ENCODE measurements at regions of chr6 and their contacts with region 1.

Region 1: GRCh38 chr6:127992144-127992543 is 91.3 kb upstream of the THEMIS start:
- DNase-seq: no peak
- ATAC-seq: no peak
- H3K4me3 ChIP-seq: no peak overlapping the region
- H3K4me3 Mint-ChIP-seq: no peak overlapping the region
- H3K27ac ChIP-seq: no peak overlapping the region
- H3K27ac Mint-ChIP-seq: no peak overlapping the region
- H3K4me1 ChIP-seq: peaks cover 0 to 3% of the 10 kb centered on the region in 2 donors
- H3K4me1 Mint-ChIP-seq: peaks cover 0 to 19% (median 15%) of the 10 kb centered on the region in 7 donors
- H3K27me3 ChIP-seq: no peaks in the 10 kb centered on the region
- H3K27me3 Mint-ChIP-seq: no peaks in the 10 kb centered on the region

Region 2: DNA sequence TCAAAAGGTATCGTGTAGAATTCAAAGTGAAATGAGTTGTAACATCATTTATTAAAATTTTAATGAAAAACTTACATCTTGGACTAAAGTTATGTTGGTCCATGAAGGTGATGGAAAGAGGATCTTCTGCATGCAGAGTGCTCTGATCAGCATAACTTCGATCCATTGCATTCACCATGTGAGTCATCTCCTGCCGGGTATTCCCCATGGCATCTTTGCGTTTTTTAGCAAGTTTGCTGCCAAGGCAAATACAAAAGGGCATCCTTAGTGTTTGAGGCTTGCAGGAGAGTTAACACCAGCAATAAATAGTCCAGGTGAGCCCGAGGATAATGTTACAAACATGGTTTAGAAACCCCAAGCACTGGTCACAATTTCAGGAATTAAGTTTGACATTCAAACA is 12.9 kb after region 1 on chr6:
- CTCF ChIA-PET with region 1: no interaction called
- POLR2A ChIA-PET with region 1: no interaction called
- intact Hi-C with region 1: loop called in 1 of 2 experiments (anchors 1 kb)
- DNase-seq: no peak
- ATAC-seq: no peak
- H3K4me3 ChIP-seq: no peak overlapping the region
- H3K4me3 Mint-ChIP-seq: no peak overlapping the region
- H3K27ac ChIP-seq: no peak overlapping the region
- H3K27ac Mint-ChIP-seq: no peak overlapping the region
- H3K4me1 ChIP-seq: no peaks in the 10 kb centered on the region
- H3K4me1 Mint-ChIP-seq: peaks cover 0 to 18% (median 6%) of the 10 kb centered on the region in 7 donors
- H3K27me3 ChIP-seq: no peaks in the 10 kb centered on the region
- H3K27me3 Mint-ChIP-seq: no peaks in the 10 kb centered on the region

Measured in naive thymus-derived CD4-positive, alpha-beta T cell (primary cell).